ENCODE measurements at regions of chr2 and their contacts with region 1.

Region 1: DNA sequence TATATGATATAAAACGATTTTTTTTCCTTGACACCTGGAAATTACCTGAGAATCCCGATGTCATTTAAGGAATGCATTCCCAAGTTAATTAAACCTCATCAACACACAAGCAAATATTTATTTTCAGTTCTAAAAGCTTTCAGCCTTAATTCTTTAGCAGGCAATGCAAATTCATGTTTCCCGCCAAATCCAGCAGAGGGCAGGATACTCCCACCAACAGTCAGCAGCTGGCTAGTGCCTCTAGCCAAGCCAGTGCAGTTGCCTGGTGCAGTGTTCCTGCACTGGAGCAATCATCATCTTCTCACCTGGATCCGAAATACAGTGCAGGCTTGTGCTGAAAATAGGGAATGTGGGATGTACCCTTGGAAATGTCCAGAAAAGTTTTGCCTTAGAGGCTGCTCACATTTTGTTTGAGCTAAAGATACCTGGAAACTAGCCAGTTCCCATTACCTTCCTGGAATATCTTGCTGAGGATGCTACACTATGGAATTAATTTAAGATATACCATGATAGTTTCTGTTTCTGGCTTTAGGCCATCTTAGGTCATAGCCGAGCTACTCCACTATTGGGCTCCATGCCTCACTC is 48.4 kb upstream of the CYTIP start:
- DNase-seq: peak; percentile 77
- ATAC-seq: peak; percentile 82
- H3K4me3 ChIP-seq: no peak overlapping the region
- H3K27ac ChIP-seq: no peak overlapping the region
- H3K4me1 ChIP-seq: peaks cover 12% of the 10 kb centered on the region
- H3K27me3 ChIP-seq: no peaks in the 10 kb centered on the region
- CTCF ChIP-seq: peak; percentile 87

Region 2: DNA sequence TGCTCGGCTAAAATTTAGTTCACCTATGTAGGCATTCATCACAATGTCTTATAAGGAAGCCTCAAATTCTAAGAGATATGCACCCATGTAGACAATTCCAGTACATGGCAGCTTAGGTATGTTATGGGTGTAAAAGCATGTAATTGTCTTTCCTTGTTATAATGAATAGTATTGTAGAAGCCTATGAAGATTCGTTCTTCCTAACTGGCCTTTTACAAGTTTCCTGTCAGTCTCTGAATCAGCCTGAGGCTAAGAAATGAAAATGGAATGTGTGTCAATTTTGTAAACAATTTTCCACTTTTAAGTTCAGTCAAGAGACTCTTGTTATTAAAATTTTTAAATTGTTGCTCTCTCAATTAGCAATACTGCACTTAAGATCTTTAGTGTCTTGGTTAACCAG is 424.7 kb before region 1 on chr2:
- CTCF ChIA-PET with region 1: no interaction called
- POLR2A ChIA-PET with region 1: no interaction called
- intact Hi-C with region 1: no loop called
- DNase-seq: peak; percentile 27
- ATAC-seq: peak; percentile 64
- H3K4me3 ChIP-seq: no peak overlapping the region
- H3K27ac ChIP-seq: no peak overlapping the region
- H3K4me1 ChIP-seq: no peaks in the 10 kb centered on the region
- H3K27me3 ChIP-seq: no peaks in the 10 kb centered on the region
- CTCF ChIP-seq: no peak

Region 3: GRCh38 chr2:157127249-157128012 is 364.9 kb before region 1 on chr2:
- CTCF ChIA-PET with region 1: no interaction called
- POLR2A ChIA-PET with region 1: no interaction called
- intact Hi-C with region 1: no loop called
- DNase-seq: no peak
- ATAC-seq: no peak
- H3K4me3 ChIP-seq: no peak overlapping the region
- H3K27ac ChIP-seq: no peak overlapping the region
- H3K4me1 ChIP-seq: no peaks in the 10 kb centered on the region; the same call in 1 of the 2 replicates
- H3K27me3 ChIP-seq: no peaks in the 10 kb centered on the region
- CTCF ChIP-seq: no peak

Region 4: DNA sequence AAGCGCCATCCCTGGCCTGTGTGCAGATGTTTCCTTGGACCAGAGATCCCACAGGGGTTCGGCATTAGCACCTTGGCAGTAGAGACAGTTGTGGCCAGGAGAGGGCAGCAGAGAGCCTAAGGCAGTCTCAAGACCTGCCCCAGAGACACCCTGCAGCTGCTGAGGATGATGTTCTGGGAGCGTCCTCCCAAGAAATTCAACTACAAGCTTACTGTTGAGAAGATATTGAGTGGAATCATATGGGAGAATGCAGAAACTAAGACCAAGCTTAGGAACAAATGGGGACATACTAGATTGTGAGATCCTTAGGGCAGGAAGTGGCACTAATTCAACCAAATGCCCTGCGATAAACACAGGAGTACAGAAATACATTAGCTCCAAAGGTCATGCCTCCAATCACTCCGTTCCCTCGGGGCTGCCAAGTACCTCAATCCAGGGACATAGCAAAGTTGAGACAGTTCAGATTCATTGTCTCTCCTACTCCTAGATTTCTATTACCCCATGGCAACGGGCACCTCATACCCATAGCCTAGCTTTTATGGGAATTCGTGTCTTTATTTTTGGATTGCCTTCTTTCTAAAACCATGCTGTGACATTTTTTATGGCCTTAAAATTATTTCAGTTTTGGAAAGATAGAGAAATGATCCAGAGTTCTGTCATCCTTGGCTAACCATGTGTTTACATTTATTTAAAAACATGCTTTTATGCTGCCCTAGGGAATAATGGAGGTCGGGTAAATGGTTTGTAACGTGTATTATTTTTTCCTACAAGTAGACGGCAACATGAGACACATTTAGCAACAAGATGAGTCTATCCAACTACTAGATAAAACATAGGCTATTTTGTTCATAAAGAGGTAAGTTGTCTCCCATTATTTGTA is 164.4 kb before region 1 on chr2:
- CTCF ChIA-PET with region 1: no interaction called
- POLR2A ChIA-PET with region 1: no interaction called
- intact Hi-C with region 1: loop called (anchors 5 kb)
- DNase-seq: peak; percentile 83
- ATAC-seq: peak; percentile 89
- H3K4me3 ChIP-seq: no peak overlapping the region
- H3K27ac ChIP-seq: no peak overlapping the region
- H3K4me1 ChIP-seq: peaks cover 13% of the 10 kb centered on the region
- H3K27me3 ChIP-seq: no peaks in the 10 kb centered on the region
- CTCF ChIP-seq: peak; percentile 91